A549 (cell line): ENCODE measurements at regions of chrX and their contacts with region 1.

Region 1: GRCh38 chrX:46408553-46409407 is 136.4 kb downstream of the ZNF674 start:
- DNase-seq: peak; percentile 35 to 76
- ATAC-seq: peak; percentile 64 to 72
- H3K4me3 ChIP-seq: no peak overlapping the region
- H3K27ac ChIP-seq: peak overlapping the region; percentile 28 to 58; a peak in 5 of 6 replicates
- H3K4me1 ChIP-seq: peaks cover 7% of the 10 kb centered on the region; the same call in 1 of the 3 replicates
- CTCF ChIP-seq: peak; percentile 89
- EP300 ChIP-seq: no peak
- POLR2A ChIP-seq: no peak
- RAD21 ChIP-seq: peak; percentile 94 to 96

Region 2: GRCh38 chrX:46398126-46398525 is 10.7 kb before region 1 on chrX:
- CTCF ChIA-PET with region 1: interaction called, 20 read pairs
- POLR2A ChIA-PET with region 1: no interaction called
- DNase-seq: no peak
- ATAC-seq: no peak
- H3K4me3 ChIP-seq: no peak overlapping the region
- H3K27ac ChIP-seq: no peak overlapping the region
- H3K4me1 ChIP-seq: no peaks in the 10 kb centered on the region
- CTCF ChIP-seq: no peak
- EP300 ChIP-seq: no peak
- POLR2A ChIP-seq: no peak
- RAD21 ChIP-seq: no peak

Region 3: DNA sequence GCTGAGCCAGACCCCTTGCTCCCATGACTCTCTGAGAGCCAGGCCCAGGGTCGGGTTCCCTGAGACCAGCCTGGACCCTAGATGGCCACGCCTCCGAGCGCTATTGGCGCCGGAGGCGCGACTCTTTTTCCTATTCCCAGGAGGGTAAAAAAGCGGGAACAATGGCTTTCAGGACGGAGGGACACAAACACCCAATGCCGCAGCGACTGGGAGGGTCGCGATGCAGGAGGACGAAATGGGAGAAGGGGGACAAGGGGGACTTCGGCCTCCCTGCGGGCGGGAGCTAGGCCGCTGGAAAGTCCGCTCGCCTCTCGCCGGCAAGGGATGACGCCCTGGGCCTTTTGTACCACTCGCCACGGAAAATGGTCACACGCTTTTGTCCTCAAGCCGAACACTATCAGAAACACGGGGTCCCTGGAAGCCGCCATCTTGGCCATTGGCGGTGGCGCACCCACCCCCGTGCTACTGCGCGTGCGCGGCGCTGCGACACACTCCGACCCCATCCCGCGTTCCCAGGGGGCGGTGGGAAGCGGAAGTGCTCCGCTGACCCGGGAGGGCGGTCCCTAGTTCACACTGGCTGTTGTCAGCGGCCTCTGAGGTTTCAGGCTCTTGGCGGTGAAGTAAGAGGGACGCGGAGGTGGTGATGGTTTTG is 38.1 kb after region 1 on chrX:
- CTCF ChIA-PET with region 1: no interaction called
- POLR2A ChIA-PET with region 1: no interaction called
- DNase-seq: peak; percentile 88 to 89
- ATAC-seq: peak; percentile 92 to 99
- H3K4me3 ChIP-seq: peak overlapping the region; percentile 98
- H3K27ac ChIP-seq: peak overlapping the region; percentile 99
- H3K4me1 ChIP-seq: peaks cover 11% of the 10 kb centered on the region; the same call in 2 of the 3 replicates
- CTCF ChIP-seq: no peak
- EP300 ChIP-seq: no peak
- POLR2A ChIP-seq: peak; percentile 62
- RAD21 ChIP-seq: no peak